Aorta (tissue), 5 donors: ENCODE measurements at regions of chr9 and their contacts with region 1.

Region 1: DNA sequence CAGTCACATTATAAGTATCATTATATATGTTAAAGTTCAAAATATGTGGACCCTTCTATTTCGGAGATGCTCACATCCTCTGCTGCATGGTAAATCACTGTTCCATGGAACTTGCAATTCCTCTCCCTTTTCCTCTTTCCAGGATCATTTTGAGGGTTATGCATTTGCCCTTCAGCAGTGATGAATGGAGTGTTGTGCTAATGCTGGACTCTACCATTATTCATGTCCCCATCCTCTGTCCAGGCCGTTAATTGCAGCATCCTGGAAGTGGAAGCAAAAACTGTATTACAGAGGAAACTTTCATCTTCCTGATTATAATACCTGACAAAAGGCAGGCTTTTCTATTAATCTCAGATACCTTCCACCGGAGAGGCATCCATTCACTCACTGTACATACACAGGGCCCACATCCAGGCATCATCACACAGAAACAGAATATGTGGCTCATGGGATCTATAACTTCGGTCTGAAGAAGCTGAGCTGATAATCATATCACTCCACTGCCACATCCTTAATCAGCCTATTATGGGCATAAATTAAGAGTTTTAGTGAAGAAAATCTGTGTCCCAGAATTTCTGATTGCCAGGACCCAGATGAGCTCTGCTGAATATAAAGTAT is 65.0 kb upstream of the ACO1 start:
- DNase-seq: no peak
- ATAC-seq: no peak
- H3K4me3 ChIP-seq: no peak overlapping the region
- H3K27ac ChIP-seq: no peak overlapping the region
- H3K4me1 ChIP-seq: no peaks in the 10 kb centered on the region
- H3K27me3 ChIP-seq: no peaks in the 10 kb centered on the region

Region 2: DNA sequence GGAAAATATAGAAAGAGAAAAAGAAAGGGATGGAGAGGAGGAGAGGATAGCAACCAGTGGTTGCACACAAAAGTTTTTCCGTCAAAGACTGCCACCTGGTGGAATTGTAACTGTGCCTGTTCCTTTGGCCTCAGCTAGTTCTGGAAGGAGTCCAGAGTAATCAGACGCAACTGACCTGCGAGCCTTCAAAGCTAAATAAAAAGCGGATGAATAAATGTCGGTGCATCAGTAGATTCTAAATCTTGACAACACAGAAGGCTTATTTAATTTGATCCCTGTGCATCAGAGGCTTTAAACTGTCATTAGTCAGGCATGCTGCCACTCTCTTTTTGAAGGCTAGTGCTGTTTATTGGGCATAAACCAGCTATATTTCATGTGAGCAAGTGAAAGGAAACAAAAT is 67.9 kb before region 1 on chr9:
- intact Hi-C with region 1: loop called in 1 of 2 experiments (anchors 10 kb)
- DNase-seq: no peak
- ATAC-seq: no peak
- H3K4me3 ChIP-seq: no peak overlapping the region
- H3K27ac ChIP-seq: no peak overlapping the region
- H3K4me1 ChIP-seq: no peaks in the 10 kb centered on the region
- H3K27me3 ChIP-seq: no peaks in the 10 kb centered on the region